Calu3 (cell line): ENCODE measurements at regions of chr1 and their contacts with region 1.

Region 1: DNA sequence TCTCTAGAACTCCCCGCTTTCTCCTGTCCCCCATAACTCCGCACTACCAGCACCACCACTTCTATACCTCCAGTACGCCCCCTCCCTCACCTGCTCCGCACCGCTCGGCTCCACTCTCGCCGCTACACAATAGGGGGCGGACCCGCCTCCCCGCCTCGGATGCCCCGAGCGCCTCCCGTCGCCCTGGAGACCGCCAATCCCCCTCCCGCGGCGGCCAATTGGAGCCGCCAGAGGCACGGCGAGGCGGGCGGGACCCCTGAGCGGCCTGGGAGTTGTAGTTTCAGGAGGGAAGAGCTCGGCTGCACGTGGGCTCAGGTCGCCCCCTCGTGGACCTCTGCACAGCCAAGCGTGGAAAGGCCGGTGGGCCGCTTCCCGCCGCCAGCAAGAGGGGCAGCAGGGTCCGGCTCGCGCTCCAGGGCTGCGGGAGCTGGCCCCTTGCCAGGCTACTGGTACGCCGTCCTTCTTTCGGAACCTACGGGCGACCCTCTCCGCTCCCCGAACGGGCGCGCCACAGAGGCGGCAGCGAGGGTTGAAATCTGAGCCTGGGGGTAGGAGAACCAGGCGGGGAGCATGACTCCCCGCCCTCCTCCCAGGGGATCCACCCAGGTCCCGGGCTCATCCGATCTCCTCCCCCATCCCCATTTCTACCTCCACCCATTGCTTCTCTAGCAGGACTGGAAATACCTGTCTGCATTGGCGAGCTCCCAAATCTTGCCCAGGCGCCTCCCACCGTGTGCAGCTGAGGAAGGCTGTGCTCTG is at the start of gene IGSF9:
- DNase-seq: peak; percentile 94
- H3K4me3 Mint-ChIP-seq: peak within 1 kb of the TSS; percentile 94
- H3K27ac Mint-ChIP-seq: peak within 1 kb of the TSS; percentile 86
- H3K4me1 Mint-ChIP-seq: peaks cover 35% of the 10 kb centered on the region
- H3K27me3 Mint-ChIP-seq: peaks cover 9% of the 10 kb centered on the region
- CTCF ChIP-seq: peak; percentile 48
- total RNA-seq, gene IGSF9: 7.5 and 7.6 TPM in 2 replicates

Region 2: DNA sequence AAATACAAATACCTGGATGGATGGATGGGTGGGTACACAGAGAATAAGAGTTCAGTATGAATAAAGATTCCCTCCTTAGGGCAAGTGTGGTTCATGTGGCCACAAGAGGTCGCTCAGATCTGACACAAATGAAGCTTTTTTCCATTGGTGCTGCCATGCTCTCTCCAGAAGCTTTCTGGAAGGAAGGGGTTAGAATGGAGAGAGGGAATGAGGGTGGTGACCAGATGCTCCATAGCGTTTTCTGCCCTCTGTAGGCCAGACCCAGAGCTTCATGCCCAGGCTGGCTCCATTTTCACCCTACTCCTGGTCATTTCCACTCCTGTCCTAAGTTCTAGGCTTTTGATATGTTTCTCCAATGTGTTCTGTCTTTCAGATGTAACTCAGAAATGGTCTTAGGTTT is 146.8 kb before region 1 on chr1:
- CTCF ChIA-PET with region 1: interaction called, 7 read pairs
- intact Hi-C with region 1: loop called (anchors 1 kb)
- DNase-seq: peak; percentile 71
- H3K4me3 Mint-ChIP-seq: no peak overlapping the region
- H3K27ac Mint-ChIP-seq: no peak overlapping the region
- H3K4me1 Mint-ChIP-seq: no peaks in the 10 kb centered on the region
- H3K27me3 Mint-ChIP-seq: peaks cover 40% of the 10 kb centered on the region
- CTCF ChIP-seq: peak; percentile 64